ENCODE measurements at regions of chr2 and their contacts with region 1.

Region 1: GRCh38 chr2:37414470-37414949 is 70.1 kb downstream of the QPCT start:
- DNase-seq: peak; percentile 72
- H3K4me3 ChIP-seq: no peak overlapping the region; a peak in 1 of 4 replicates
- H3K27ac ChIP-seq: peak overlapping the region; percentile 42 to 87; a peak in 3 of 4 replicates
- H3K4me1 ChIP-seq: peaks cover 10 to 16% of the 10 kb centered on the region in 2 experiments
- H3K27me3 ChIP-seq: no peaks in the 10 kb centered on the region
- CTCF ChIP-seq: peak; percentile 99
- EP300 ChIP-seq: 0 out of 4 replicates have a peak, but pooled peaks of 1 of the 2 experiments have one; percentile 36
- RAD21 ChIP-seq: peak; percentile 100

Region 2: DNA sequence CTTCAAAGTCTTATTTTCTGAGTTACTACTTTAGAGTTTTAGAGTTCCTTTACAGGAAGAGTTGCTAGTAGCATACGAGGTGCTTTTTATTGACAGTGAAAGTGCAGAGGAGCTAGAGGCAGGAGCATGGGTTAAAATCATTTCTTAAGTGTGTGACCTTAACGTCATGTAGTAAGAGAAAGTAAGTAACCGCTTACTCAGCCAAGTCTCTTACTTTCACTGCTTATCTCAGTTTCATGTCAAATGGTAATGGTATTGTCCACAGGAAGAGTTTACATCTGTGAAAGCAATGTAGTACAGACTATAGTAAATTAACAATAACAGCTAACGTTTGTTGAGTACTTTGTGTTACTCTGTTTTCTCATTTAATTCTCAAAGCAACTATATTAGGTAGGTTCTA is 170.5 kb before region 1 on chr2:
- CTCF ChIA-PET with region 1: no interaction called
- POLR2A ChIA-PET with region 1: no interaction called
- DNase-seq: no peak
- H3K4me3 ChIP-seq: no peak overlapping the region
- H3K27ac ChIP-seq: no peak overlapping the region
- H3K4me1 ChIP-seq: peaks cover 0 to 6% of the 10 kb centered on the region in 2 experiments; a peak in 2 of 4 replicates
- H3K27me3 ChIP-seq: no peaks in the 10 kb centered on the region
- CTCF ChIP-seq: no peak
- EP300 ChIP-seq: no peak
- RAD21 ChIP-seq: no peak

Region 3: GRCh38 chr2:37389989-37390765 is 24.3 kb before region 1 on chr2:
- CTCF ChIA-PET with region 1: interaction called, 174 read pairs
- POLR2A ChIA-PET with region 1: no interaction called
- DNase-seq: no peak
- H3K4me3 ChIP-seq: no peak overlapping the region
- H3K27ac ChIP-seq: peak overlapping the region in 1 of 2 experiments; percentile 68; a peak in 2 of 4 replicates
- H3K4me1 ChIP-seq: peaks cover 6 to 32% of the 10 kb centered on the region in 2 experiments; a peak in 3 of 4 replicates
- H3K27me3 ChIP-seq: no peaks in the 10 kb centered on the region
- CTCF ChIP-seq: no peak
- EP300 ChIP-seq: peak in 1 of 2 experiments; percentile 62; a peak in 1 of 4 replicates
- RAD21 ChIP-seq: no peak

Region 4: GRCh38 chr2:37506407-37507050 is 92.0 kb after region 1 on chr2:
- CTCF ChIA-PET with region 1: interaction called, 18 read pairs
- POLR2A ChIA-PET with region 1: no interaction called
- DNase-seq: peak; percentile 47
- H3K4me3 ChIP-seq: no peak overlapping the region; a peak in 1 of 4 replicates
- H3K27ac ChIP-seq: peak overlapping the region; percentile 27 to 93; a peak in 3 of 4 replicates
- H3K4me1 ChIP-seq: peaks cover 9 to 22% of the 10 kb centered on the region in 2 experiments
- H3K27me3 ChIP-seq: no peaks in the 10 kb centered on the region
- CTCF ChIP-seq: no peak
- EP300 ChIP-seq: peak; percentile 63 to 99; a peak in 3 of 4 replicates
- RAD21 ChIP-seq: peak; percentile 41

Region 5: DNA sequence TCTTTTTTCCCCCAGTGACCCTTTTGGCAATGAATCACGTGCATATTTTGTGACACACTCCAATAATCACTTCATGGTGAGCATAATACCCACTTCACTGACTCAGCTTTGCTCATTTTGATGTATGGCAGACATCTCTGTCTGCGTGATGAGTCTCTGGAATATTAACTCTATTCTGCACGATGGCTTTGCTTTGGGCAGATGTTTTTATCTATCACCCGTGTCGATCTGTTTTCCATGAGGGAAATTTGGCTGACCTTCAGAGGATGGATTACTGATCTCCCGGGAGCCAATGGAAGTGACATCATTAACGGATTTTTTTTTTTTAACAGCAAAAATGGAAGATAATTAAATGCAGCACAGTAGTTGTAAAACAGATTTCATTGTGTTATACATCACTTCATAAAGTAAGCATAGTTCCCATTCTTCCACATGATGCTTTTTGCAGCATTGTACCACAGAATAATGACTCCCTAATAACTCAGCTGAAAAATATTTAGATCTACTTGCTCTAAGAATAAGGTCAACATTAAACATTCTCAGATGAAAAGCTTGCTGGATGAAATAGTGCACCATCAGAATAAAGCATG is 227.2 kb after region 1 on chr2:
- CTCF ChIA-PET with region 1: interaction called, 26 read pairs
- POLR2A ChIA-PET with region 1: no interaction called
- DNase-seq: peak; percentile 79
- H3K4me3 ChIP-seq: no peak overlapping the region
- H3K27ac ChIP-seq: peak overlapping the region; percentile 93 to 95
- H3K4me1 ChIP-seq: peaks cover 56 to 76% of the 10 kb centered on the region in 2 experiments
- H3K27me3 ChIP-seq: no peaks in the 10 kb centered on the region
- CTCF ChIP-seq: no peak
- EP300 ChIP-seq: peak; percentile 98
- RAD21 ChIP-seq: peak; percentile 29; the same call in 1 of the 2 replicates

Region 6: GRCh38 chr2:37819186-37819585 is 404.7 kb after region 1 on chr2:
- CTCF ChIA-PET with region 1: interaction called, 54 read pairs
- POLR2A ChIA-PET with region 1: no interaction called
- DNase-seq: peak; percentile 27
- H3K4me3 ChIP-seq: no peak overlapping the region
- H3K27ac ChIP-seq: peak overlapping the region; percentile 47 to 68; a peak in 3 of 4 replicates
- H3K4me1 ChIP-seq: peaks cover 12 to 15% of the 10 kb centered on the region in 2 experiments; a peak in 3 of 4 replicates
- H3K27me3 ChIP-seq: no peaks in the 10 kb centered on the region
- CTCF ChIP-seq: no peak
- EP300 ChIP-seq: peak in 1 of 2 experiments; percentile 80; a peak in 1 of 4 replicates
- RAD21 ChIP-seq: no peak

Region 7: GRCh38 chr2:37871456-37872191 is 457.1 kb after region 1 on chr2:
- CTCF ChIA-PET with region 1: interaction called, 540 read pairs
- POLR2A ChIA-PET with region 1: no interaction called
- DNase-seq: no peak
- H3K4me3 ChIP-seq: no peak overlapping the region
- H3K27ac ChIP-seq: peak overlapping the region; percentile 63 to 96
- H3K4me1 ChIP-seq: peaks cover 20 to 47% of the 10 kb centered on the region in 2 experiments; a peak in 3 of 4 replicates
- H3K27me3 ChIP-seq: no peaks in the 10 kb centered on the region
- CTCF ChIP-seq: no peak
- EP300 ChIP-seq: no peak
- RAD21 ChIP-seq: no peak

Measured in SK-N-SH (cell line).